Stomach (tissue), 19 donors: ENCODE measurements at regions of chr9 and their contacts with region 1.

Region 1: GRCh38 chr9:99906403-99907207 is at the start of gene STX17:
- DNase-seq: peak; percentile 79 to 94
- H3K4me3 ChIP-seq: peak within 1 kb of the TSS; percentile 54 to 99 (median 72)
- H3K27ac ChIP-seq: peak within 1 kb of the TSS; percentile 94 to 99 (median 98)
- H3K4me1 ChIP-seq: peaks cover 0 to 33% (median 17%) of the 10 kb centered on the region in 4 donors
- H3K27me3 ChIP-seq: no peaks in the 10 kb centered on the region
- CTCF ChIP-seq: no peak
- EP300 ChIP-seq: no peak
- POLR2A ChIP-seq: peak in 2 of 4 donors; percentile 29 to 52
- total RNA-seq, gene STX17: 14.2 to 44.8 (median 22.8) TPM

Region 2: GRCh38 chr9:99819856-99820684 is 86.5 kb before region 1 on chr9:
- intact Hi-C with region 1: loop called (anchors 10 kb)
- DNase-seq: peak; percentile 91 to 97
- H3K4me3 ChIP-seq: peak overlapping the region; percentile 71 to 95 (median 81)
- H3K27ac ChIP-seq: peak overlapping the region; percentile 95 to 100 (median 99)
- H3K4me1 ChIP-seq: peaks cover 23 to 52% (median 50%) of the 10 kb centered on the region in 4 donors
- H3K27me3 ChIP-seq: peaks cover 0 to 31% (median 10%) of the 10 kb centered on the region in 3 donors
- CTCF ChIP-seq: no peak
- EP300 ChIP-seq: peak; percentile 98
- POLR2A ChIP-seq: peak in 2 of 4 donors; percentile 36 to 41